Right ventricle myocardium inferior (tissue), 1 donor: ENCODE measurements at regions of chr5 and their contacts with region 1.

Region 1: DNA sequence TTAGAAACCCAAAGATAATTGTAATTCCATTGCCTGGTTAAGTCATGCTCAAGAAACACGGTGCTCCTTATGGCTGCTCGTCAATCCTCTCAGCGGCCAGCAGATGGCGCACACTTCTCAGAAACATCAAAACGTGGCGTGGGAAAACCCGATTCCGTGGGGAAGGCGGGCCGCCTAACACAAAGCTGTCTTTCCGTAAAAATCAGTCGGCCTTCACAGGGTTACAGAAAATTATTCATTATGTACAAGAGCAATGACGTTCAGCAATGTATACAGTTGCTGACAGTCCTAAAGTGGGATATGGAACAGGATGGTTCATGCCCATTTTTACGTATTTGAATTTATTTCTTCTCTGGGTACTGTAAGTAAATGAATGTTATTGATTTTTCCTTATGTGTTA is 83.5 kb downstream of the PDE4D start:
- DNase-seq: peak; percentile 87
- ATAC-seq: no peak

Region 2: GRCh38 chr5:60382716-60383115 is 572.7 kb after region 1 on chr5:
- intact Hi-C with region 1: loop called (anchors 5 kb)
- DNase-seq: no peak
- ATAC-seq: no peak

Region 3: DNA sequence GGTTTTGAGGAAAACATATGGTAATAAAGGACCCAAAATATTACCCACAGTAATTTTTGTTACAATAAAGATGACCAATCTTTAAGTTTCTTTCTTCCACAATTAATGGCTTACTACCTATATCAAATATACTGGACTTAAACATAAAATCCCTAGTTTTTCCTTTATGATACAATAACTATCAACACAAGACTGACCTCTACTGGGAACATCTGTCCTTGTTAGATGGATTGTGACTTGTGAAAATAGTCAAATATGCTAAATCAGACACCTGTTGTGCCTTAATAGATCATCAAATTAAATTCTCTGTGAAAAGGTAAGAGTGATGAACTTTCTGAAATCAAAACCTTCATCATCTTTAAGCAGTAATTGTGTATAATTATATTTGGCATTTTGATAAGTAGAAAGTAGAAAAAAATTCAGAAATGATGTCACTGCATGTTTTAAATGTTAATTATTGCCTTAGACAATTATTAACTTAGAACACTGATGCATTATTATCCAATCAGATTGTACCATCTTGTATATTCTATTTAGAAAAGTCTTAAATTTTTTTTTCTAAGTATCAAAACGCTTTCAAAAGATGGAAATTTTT is 776.4 kb after region 1 on chr5:
- intact Hi-C with region 1: loop called (anchors 5 kb)
- DNase-seq: no peak
- ATAC-seq: no peak

Region 4: GRCh38 chr5:60668686-60669304 is 858.8 kb after region 1 on chr5:
- intact Hi-C with region 1: loop called (anchors 2 kb)
- DNase-seq: no peak
- ATAC-seq: no peak